ENCODE measurements at regions of chr3 and their contacts with region 1.

Region 1: DNA sequence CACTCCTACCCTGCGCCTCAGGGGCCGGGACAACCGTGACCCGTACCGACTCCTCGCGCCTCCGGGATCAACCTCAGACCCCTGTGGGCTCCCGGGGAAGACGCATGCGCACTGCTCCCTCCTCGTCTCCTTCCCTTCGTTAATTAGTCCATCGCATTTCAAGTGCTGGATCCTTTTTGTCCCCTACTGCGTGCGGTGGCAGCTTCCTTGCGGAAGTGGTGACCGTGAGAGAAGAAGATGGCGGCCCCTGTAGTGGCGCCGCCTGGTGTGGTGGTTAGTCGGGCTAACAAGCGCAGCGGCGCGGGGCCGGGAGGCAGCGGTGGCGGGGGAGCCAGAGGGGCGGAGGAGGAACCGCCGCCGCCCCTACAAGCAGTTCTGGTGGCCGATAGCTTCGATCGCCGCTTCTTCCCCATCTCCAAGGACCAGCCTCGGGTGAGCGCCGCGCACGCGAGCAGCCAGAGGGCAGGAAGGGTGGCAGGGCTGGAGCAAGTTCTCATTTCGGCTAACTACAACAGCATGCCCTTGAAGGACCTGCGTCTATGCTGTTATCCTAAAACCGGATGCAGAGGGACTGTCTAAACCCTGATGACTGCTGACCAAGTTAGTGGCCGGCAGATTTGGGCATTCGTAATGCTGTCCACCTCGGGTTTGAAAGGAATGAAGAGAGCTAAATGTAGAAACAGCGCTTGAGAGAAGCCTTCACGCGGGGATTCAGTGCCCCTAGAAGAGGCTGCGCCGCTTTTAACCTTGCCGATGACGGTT is at the start of gene EIF2B5:
- DNase-seq: peak; percentile 91 to 95
- ATAC-seq: peak; percentile 94 to 98 (median 96)
- H3K4me3 ChIP-seq: peak within 1 kb of the TSS; percentile 53 to 99 (median 87)
- H3K27ac ChIP-seq: peak within 1 kb of the TSS; percentile 28 to 95 (median 90)
- H3K4me1 ChIP-seq: peaks cover 4 to 28% (median 22%) of the 10 kb centered on the region in 9 donors
- H3K27me3 ChIP-seq: no peaks in the 10 kb centered on the region
- CTCF ChIP-seq: peak in 7 of 9 donors; percentile 20 to 73 (median 52)
- total RNA-seq, gene EIF2B5: 26.8 to 37.3 (median 31.6) TPM

Region 2: DNA sequence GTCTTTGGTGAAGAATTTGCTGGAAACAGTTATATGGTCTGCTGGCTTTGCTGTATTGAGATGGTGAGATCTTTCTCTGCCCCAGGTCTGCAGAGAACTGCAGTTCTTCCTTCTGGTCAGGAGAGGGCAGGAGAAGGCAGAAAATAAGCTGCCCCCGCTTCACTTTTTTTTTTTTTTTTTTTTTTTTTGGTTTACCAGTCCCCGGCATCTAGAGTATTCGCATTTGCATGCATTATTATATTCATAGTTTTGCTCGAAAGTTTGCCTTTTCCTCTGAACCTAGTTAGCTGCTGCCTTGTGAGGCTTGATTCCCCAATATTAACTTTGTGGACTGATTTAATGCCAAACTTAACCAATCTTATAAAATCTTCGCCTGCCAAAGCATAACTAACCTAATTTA is 240.0 kb before region 1 on chr3:
- intact Hi-C with region 1: loop called in 2 of 10 experiments (anchors 10 kb)
- DNase-seq: no peak
- ATAC-seq: peak in 7 of 8 donors; percentile 43 to 71 (median 58)
- H3K4me3 ChIP-seq: no peak overlapping the region
- H3K27ac ChIP-seq: no peak overlapping the region
- H3K4me1 ChIP-seq: peaks cover 0 to 4% (median 0%) of the 10 kb centered on the region in 9 donors
- H3K27me3 ChIP-seq: peaks cover 0 to 49% (median 0%) of the 10 kb centered on the region in 7 donors
- CTCF ChIP-seq: peak; percentile 53 to 88 (median 78)

Region 3: DNA sequence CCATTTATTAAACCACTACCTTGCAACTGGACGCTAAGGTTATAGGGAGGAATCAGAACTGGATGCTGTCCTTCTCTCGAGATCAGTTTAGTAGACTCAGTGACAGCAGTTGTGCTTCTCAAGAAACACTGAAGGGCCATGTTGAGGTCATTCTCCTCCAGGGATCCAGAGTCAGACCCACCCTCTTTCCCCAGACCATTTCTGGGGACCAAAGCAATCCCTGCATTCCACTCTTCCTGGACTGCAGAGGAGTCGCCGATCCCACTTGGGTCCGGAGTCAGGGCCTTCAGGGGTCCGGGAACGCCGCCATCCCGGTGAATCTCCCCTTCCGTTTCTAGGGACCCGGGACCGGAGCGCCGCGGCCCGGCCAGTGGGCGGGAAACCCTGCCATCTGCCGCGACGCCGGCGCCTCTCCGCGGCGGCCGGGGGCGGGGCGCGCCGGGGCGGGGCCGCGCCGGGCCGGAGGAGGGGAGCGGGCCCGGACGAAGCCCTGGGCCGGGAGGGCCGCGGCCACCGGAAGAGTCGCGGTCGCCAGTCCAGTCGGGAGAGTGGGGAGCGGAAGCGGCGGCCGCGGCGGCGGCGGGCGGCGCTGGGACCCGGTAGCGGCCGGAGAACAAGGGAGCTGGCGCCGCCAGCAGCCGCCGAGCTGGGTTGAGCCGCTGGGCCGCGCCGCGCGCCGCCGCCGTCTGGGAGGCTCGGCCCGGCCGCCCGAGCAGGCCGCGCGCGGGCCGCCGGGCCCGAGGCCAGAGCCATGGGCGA is 19.7 kb after region 1 on chr3 and contains the start of gene DVL3:
- intact Hi-C with region 1: loop called in 4 of 10 experiments (anchors 2 kb)
- DNase-seq: peak; percentile 74 to 82
- ATAC-seq: peak; percentile 59 to 93 (median 81)
- H3K4me3 ChIP-seq: peak within 1 kb of the TSS; percentile 87 to 99 (median 97)
- H3K27ac ChIP-seq: peak within 1 kb of the TSS; percentile 91 to 99 (median 96)
- H3K4me1 ChIP-seq: peaks cover 22 to 53% (median 42%) of the 10 kb centered on the region in 9 donors
- H3K27me3 ChIP-seq: no peaks in the 10 kb centered on the region
- CTCF ChIP-seq: no peak
- total RNA-seq, gene DVL3: 52.6 to 81.7 (median 68.6) TPM

Region 4: DNA sequence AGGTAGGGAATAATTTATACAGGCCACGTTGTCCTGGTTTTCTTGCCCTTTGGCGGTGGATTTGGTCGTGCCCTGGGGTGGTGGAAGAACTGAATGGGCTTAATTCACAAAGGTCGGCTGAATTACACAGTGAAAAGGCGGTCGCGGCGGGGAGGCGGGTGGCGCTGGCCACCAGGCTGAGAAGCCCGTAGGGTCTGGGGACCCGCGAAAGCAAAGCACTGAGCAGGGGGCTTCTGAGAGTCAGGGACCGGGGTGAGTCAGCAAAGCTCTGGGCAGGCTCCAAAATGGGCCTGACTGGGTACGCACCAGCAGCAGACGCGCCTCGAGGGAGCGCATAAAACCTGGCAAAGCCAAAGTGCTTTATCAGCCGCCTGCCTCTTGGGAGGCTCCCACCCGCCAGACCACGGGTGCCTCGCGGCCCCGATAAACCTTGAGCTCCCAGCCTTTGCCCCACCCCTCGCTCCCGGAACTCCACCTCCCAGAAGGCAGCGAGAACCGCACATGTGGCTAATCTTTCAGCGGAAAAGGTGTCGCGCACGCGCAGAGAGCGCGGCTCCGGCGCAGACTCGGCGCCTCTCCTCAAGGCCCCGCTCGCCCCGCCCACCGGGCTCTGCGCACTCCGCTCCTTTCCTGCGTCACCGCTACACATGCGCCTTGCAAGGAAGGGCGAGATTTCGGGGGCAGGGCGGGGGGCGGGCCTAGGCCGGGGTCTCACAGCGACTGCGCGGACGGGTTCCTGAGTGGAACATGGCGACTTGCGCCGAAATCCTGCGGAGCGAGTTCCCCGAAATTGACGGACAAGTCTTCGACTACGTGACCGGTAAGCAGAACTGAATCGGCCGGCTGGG is 50.4 kb after region 1 on chr3 and contains the start of gene ABCF3:
- intact Hi-C with region 1: loop called in 3 of 10 experiments (anchors 2 to 5 kb)
- DNase-seq: peak; percentile 99 to 100
- ATAC-seq: peak; percentile 96 to 99 (median 98)
- H3K4me3 ChIP-seq: peak within 1 kb of the TSS; percentile 72 to 99 (median 92)
- H3K27ac ChIP-seq: peak within 1 kb of the TSS; percentile 68 to 96 (median 92)
- H3K4me1 ChIP-seq: peaks cover 11 to 35% (median 30%) of the 10 kb centered on the region in 9 donors
- H3K27me3 ChIP-seq: no peaks in the 10 kb centered on the region
- CTCF ChIP-seq: no peak
- total RNA-seq, gene ABCF3: 60.1 to 90.7 (median 68.3) TPM

Region 5: GRCh38 chr3:184289426-184289938 is 154.2 kb after region 1 on chr3:
- intact Hi-C with region 1: no loop called
- DNase-seq: peak; percentile 34 to 35
- ATAC-seq: peak in 4 of 8 donors; percentile 27 to 61 (median 42)
- H3K4me3 ChIP-seq: no peak overlapping the region
- H3K27ac ChIP-seq: no peak overlapping the region
- H3K4me1 ChIP-seq: peaks cover 0 to 7% (median 0%) of the 10 kb centered on the region in 9 donors
- H3K27me3 ChIP-seq: peaks cover 0 to 23% (median 6%) of the 10 kb centered on the region in 7 donors
- CTCF ChIP-seq: peak in 8 of 9 donors; percentile 26 to 72 (median 59)

Measured in heart right ventricle (tissue), 16 donors.